ENCODE measurements at regions of chr12 and their contacts with region 1.

Region 1: DNA sequence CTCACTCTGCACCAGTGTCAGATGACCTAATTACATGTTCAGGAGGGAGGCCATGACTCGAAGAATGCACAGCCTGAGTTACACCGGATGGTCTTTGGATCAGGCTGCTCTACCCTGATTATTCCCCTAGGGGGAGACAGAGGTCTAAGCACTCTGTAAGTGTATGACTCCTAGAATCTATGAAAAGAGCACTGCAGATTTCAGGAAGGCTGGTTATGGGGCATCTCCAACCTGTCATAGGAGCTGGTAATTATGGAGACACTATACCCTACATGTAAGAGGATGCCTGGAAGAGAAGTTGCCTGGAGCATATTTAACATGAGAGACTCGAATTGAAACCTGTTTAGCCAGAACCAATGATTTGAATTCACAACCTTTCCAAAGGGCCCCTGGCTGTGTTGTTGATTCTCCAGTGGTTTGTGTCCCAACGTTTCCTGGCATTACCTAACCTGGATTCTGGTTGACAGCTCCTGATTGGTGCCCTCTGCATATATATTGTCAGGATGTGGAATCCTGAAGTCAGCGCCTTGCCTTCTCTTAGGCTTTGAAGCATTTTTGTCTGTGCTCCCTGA is at the start of gene MUCL1:
- DNase-seq: peak; percentile 93
- H3K4me3 Mint-ChIP-seq: no peak within 1 kb of the TSS
- H3K27ac Mint-ChIP-seq: no peak within 1 kb of the TSS
- H3K4me1 Mint-ChIP-seq: peaks cover 20% of the 10 kb centered on the region
- H3K27me3 Mint-ChIP-seq: peaks cover 5% of the 10 kb centered on the region
- total RNA-seq, gene MUCL1: 0.54 and 0.84 TPM in 2 replicates

Region 2: GRCh38 chr12:54017878-54018467 is 836.1 kb before region 1 on chr12:
- intact Hi-C with region 1: no loop called
- DNase-seq: peak; percentile 91
- H3K4me3 Mint-ChIP-seq: peak overlapping the region; percentile 86
- H3K27ac Mint-ChIP-seq: peak overlapping the region; percentile 37
- H3K4me1 Mint-ChIP-seq: peaks cover 17% of the 10 kb centered on the region
- H3K27me3 Mint-ChIP-seq: peaks cover 79% of the 10 kb centered on the region

Region 3: DNA sequence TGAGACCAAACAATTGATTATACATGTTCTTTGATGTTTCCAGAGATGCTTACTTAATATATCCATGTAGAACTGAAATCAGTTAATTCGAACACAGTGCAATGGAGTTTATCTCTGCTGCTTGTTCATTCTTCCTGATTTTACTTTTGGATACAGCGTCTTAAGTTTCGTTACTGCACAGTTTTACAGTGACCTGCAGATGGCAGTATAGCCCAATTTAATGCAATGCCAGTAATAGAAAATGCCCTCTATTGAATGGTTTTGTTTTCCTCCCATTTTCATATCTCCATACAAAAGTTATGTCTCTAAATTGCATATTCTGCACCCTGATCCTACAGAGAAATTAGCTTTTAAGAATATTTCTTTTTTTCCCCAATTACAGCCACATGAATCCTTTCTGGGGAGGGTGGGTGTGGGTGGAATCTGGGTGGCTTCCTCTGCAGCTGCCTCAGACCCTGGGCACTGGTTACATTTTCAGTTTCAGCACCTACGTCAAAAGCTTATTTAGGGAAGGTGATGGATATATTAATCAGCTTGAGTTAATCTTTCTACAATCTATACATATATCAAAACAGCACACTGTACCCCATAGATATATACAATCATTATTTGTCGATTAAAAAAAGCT is 104.8 kb before region 1 on chr12:
- intact Hi-C with region 1: loop called (anchors 2 kb)
- DNase-seq: peak; percentile 84
- H3K4me3 Mint-ChIP-seq: peak overlapping the region; percentile 41
- H3K27ac Mint-ChIP-seq: no peak overlapping the region
- H3K4me1 Mint-ChIP-seq: peaks cover 16% of the 10 kb centered on the region
- H3K27me3 Mint-ChIP-seq: peaks cover 20% of the 10 kb centered on the region

Region 4: DNA sequence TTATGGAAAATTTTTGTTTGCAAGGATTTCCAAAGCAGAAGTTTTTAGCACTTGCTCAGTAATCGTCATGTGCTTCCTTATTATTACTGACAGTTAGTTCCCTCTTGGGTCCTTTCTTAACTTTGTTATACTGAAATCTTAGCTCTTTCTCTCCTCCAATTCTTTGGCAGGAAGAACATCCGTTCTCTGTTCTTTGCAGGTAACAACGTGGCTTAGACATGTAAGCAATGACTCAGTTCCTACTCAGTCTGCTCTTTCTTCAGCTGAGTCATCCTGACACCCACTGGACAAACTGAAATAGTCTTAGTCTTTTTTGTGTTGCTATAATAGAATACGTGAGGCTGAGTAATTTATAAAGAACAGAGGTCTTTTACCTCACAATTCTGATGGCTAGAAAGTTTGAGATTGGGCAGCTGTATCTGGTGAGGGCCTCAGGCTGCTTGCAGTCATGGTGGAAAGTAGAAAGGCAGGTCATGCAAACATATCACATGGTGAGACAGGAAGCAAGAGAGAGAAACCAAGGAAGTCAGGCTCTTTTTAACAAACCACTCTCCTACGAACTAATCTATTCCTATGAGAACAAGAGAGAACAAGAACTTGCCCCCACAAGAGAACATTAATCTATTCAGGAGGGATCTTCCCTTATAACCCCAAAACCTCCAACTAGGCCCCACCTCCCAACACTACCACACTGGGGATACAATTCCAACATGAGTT is 81.3 kb after region 1 on chr12:
- intact Hi-C with region 1: loop called (anchors 2 kb)
- DNase-seq: peak; percentile 83
- H3K4me3 Mint-ChIP-seq: peak overlapping the region; percentile 56
- H3K27ac Mint-ChIP-seq: peak overlapping the region; percentile 92
- H3K4me1 Mint-ChIP-seq: peaks cover 50% of the 10 kb centered on the region
- H3K27me3 Mint-ChIP-seq: no peaks in the 10 kb centered on the region

Measured in activated CD4-positive, alpha-beta T cell treated with anti-CD3 and anti-CD28 coated beads, Interleukin-2, amount 10 ng/mL, durations not matched to agents 24 days and 14 days (primary cell).